ENCODE measurements at regions of chr2 and their contacts with region 1.

Region 1: GRCh38 chr2:110677530-110678456 is at the start of gene BUB1:
- DNase-seq: peak; percentile 98
- H3K4me3 Mint-ChIP-seq: peak within 1 kb of the TSS; percentile 90
- H3K27ac Mint-ChIP-seq: peak within 1 kb of the TSS; percentile 95
- H3K4me1 Mint-ChIP-seq: peaks cover 41% of the 10 kb centered on the region
- H3K27me3 Mint-ChIP-seq: peaks cover 3% of the 10 kb centered on the region
- total RNA-seq, gene BUB1: 114 to 120 TPM

Region 2: GRCh38 chr2:110657724-110658305 is 20.0 kb before region 1 on chr2:
- CTCF ChIA-PET with region 1: interaction called, 9 read pairs
- POLR2A ChIA-PET with region 1: interaction called, 20 read pairs
- DNase-seq: peak; percentile 32
- H3K4me3 Mint-ChIP-seq: no peak overlapping the region
- H3K27ac Mint-ChIP-seq: peak overlapping the region; percentile 86
- H3K4me1 Mint-ChIP-seq: peaks cover 37% of the 10 kb centered on the region
- H3K27me3 Mint-ChIP-seq: no peaks in the 10 kb centered on the region

Region 3: GRCh38 chr2:110667071-110667470 is 10.7 kb before region 1 on chr2:
- CTCF ChIA-PET with region 1: interaction called, 4 read pairs
- POLR2A ChIA-PET with region 1: interaction called, 23 read pairs
- DNase-seq: no peak
- H3K4me3 Mint-ChIP-seq: no peak overlapping the region
- H3K27ac Mint-ChIP-seq: no peak overlapping the region
- H3K4me1 Mint-ChIP-seq: peaks cover 20% of the 10 kb centered on the region
- H3K27me3 Mint-ChIP-seq: no peaks in the 10 kb centered on the region

Region 4: DNA sequence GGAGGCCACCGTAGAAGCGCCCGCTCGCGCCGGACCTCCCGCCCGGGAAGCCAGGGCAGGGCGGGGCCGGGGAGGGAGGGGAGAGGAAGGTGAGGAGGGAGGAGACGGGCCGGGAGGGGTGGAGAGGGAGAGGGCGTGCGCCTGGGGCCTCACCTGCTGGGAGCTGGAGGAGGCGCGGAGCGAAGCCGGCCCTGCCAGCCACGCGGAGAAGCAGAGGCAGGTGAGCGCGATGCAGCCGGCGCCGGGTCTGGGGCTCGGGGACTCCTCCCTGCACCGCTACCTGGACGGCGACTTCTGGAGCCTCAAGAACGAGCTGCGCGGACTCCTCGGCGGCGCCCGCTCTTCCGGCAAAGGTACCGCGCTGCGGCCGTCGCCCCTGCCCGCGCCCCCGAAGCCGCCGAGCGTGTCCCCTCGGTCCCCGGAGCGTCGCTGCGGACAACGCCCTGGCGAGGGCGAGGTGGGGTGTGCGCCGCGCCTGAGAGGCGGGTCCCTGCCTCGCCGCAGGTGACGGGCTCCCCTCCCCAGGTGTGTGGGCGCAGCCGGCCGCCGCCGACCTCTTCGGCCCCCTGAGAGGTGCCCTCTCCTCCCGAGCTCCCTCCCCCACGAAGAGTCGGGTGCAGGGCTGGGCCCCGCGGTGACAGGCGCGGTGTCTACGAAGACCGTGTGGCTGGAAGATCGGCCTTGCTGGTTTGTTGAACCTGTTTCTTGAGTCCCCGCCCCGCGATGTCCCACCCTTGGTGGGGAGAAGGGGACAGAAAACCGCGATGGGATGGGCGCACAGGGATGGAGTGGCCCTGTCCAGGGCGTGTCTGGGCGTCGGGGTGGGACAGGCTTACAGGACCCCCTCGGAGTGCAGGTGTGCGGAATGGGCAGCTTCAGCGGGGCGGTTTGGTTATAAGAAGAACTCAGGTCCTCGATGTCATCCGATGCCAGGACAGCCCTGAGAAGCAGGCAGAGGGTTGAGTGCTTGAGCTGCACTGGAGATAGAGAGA is 54.9 kb after region 1 on chr2 and contains the start of gene ACOXL:
- CTCF ChIA-PET with region 1: interaction called, 3 read pairs
- POLR2A ChIA-PET with region 1: interaction called, 13 read pairs
- DNase-seq: no peak
- H3K4me3 Mint-ChIP-seq: peak within 1 kb of the TSS; percentile 12
- H3K27ac Mint-ChIP-seq: no peak within 1 kb of the TSS
- H3K4me1 Mint-ChIP-seq: peaks cover 13% of the 10 kb centered on the region
- H3K27me3 Mint-ChIP-seq: peaks cover 77% of the 10 kb centered on the region
- total RNA-seq, gene ACOXL: 0.18 to 0.30 TPM

Region 5: DNA sequence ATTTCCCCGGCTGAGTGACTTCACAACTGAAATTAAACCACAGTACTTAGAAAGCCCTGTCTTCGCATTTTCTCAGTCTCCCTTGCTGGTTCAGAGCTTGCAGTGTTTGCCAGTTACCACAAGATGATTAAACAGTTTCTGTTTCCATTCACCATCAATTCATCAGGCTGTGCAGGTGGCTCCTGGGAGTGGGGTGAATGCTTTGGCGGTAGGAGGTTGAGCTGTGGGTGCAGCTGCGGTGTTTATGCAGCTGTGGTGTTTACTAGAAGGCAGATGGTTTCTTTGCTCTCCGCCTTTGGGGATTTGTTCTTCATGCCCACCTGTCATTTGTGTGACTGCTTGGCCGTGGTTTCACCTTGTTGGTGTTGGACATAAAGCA is 70.7 kb after region 1 on chr2:
- CTCF ChIA-PET with region 1: interaction called, 36 read pairs
- POLR2A ChIA-PET with region 1: interaction called, 49 read pairs
- DNase-seq: peak; percentile 87
- H3K4me3 Mint-ChIP-seq: peak overlapping the region; percentile 22
- H3K27ac Mint-ChIP-seq: peak overlapping the region; percentile 69
- H3K4me1 Mint-ChIP-seq: peaks cover 42% of the 10 kb centered on the region
- H3K27me3 Mint-ChIP-seq: peaks cover 31% of the 10 kb centered on the region

Region 6: DNA sequence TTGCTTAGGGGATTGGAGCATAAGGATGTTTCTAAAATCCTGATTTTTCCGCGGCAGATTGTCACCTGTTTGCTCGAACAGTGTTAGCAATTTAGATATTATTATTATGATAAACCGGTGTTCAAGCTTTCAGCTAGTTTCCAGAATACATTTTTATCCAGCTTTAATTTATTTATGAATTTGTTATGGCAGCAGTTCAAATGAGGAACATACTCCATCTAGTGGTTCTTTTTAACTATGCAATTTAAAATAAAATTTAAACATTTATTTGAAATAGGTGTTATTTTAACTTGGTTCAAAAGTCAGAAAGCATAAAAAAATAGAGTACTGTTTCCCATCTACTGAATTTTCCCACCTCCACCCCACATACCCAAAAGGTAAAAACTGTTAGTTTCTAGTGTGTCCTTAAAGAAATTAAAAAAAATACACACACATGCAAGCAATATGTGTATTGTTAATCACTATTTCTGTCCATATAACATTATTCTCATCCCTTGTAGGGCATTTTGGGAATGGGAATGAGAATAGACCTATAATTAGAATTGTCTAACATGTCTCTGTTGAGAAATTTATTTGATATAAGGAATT is 77.8 kb after region 1 on chr2:
- CTCF ChIA-PET with region 1: interaction called, 36 read pairs
- POLR2A ChIA-PET with region 1: interaction called, 12 read pairs
- DNase-seq: no peak
- H3K4me3 Mint-ChIP-seq: no peak overlapping the region
- H3K27ac Mint-ChIP-seq: no peak overlapping the region
- H3K4me1 Mint-ChIP-seq: no peaks in the 10 kb centered on the region
- H3K27me3 Mint-ChIP-seq: peaks cover 47% of the 10 kb centered on the region

Region 7: DNA sequence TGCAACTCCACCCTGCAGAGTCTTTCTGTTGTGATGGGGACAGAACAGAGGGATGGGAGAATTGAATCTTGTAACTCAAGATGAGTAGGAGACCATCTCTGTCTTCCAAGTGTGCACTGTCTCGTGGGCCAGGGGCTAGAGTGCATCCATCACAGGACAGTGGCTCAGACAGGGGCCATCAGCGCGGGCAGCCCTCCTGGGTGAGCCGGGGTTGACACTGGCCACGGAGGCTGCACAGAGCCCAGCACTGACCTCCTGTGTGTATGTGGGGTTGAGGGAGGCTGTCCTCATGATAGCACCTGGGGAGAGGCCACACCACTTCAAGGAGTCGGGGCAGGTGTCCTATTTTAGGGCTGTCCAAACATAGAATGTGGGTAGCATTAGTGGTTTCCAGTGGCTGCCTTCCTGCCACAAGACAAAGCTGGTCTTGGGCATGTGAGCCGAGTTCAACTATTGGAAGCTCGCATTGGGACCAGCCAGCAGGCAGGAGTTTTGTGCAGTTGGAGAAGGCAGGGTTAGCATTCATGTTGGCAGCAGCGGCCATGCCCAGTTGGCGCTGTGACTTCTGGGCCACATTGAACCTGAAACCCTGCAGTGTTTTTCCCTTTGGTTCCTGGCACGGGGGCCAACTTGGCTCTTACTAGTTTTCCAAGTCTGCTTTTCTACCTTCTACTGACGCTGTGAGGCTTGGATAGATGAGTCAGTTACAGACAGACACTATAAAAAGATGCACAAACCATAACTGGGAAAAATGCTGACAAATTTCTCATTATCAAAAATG is 99.9 kb after region 1 on chr2:
- CTCF ChIA-PET with region 1: no interaction called
- POLR2A ChIA-PET with region 1: no interaction called
- DNase-seq: no peak
- H3K4me3 Mint-ChIP-seq: no peak overlapping the region
- H3K27ac Mint-ChIP-seq: no peak overlapping the region
- H3K4me1 Mint-ChIP-seq: no peaks in the 10 kb centered on the region
- H3K27me3 Mint-ChIP-seq: peaks cover 57% of the 10 kb centered on the region

Measured in activated CD4-positive, alpha-beta memory T cell treated with anti-CD3 and anti-CD28 coated beads, Interleukin-2, amount 10 ng/mL, durations not matched to agents 7 days and 5 days (primary cell).